ENCODE measurements at regions of chr1 and their contacts with region 1.

Region 1: GRCh38 chr1:50774759-50775351 is 185.2 kb downstream of the FAF1 start:
- DNase-seq: peak; percentile 37
- CTCF ChIP-seq: peak; percentile 59

Region 2: GRCh38 chr1:50412813-50413476 is 361.9 kb before region 1 on chr1:
- CTCF ChIA-PET with region 1: no interaction called
- POLR2A ChIA-PET with region 1: no interaction called
- DNase-seq: no peak
- CTCF ChIP-seq: no peak

Region 3: GRCh38 chr1:50796272-50796671 is 21.4 kb after region 1 on chr1:
- CTCF ChIA-PET with region 1: interaction called, 26 read pairs
- POLR2A ChIA-PET with region 1: no interaction called
- DNase-seq: no peak
- CTCF ChIP-seq: no peak

Region 4: DNA sequence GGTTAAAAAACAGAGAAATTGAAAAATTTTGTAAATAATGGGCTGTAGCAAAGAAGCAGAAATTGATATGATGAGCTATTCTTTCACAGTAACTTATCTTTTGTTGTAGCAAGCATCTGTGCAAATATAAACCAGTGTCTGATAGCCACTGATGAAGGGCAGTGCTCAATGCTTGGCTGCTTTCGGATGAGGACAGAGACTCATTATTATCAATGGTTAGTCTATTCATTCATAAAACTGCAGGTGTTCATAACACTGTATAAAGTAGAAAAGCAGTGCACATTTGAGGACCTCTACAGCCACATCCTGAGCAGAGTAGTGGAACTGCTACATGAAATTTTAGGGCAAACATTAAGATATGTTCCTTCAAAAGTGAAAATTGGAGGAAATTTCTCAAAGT is 78.0 kb after region 1 on chr1:
- CTCF ChIA-PET with region 1: no interaction called
- POLR2A ChIA-PET with region 1: no interaction called
- DNase-seq: no peak
- CTCF ChIP-seq: no peak

Region 5: DNA sequence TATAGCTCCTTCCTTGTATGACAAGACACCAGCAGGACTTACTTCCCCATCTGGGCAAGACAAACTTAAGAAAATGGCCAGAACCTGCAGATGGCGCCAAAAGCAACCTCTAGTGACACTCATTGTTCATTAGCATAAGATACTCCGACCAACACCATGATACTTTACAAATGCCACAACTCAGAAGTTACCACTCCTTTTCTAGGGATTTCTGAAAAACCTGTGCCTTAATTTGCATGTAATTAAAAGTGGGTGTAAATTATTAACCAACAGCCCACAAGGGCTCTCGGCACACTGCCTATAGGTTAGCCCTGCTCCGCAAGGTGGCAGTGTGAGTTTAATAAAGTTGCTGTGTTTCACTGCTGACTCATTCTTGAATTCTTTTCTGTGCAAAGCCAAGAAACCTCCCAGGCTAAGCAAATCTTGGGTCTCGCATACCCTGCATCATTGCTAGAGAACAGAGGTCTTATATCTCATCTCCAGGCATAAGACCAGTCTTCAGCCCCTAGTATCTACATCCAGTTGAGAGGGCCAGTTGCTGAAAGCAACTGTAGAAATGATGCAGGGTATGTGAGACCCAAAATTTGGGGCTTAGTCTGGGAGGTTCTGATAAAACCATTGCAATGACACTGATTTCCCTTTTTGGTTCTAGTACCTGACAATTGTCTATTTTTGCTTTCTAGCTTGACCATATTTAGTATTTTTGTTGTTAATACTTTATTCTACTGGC is 98.8 kb after region 1 on chr1:
- CTCF ChIA-PET with region 1: interaction called, 17 read pairs
- POLR2A ChIA-PET with region 1: no interaction called
- DNase-seq: peak; percentile 62
- CTCF ChIP-seq: peak; percentile 76

Measured in GM10248 (cell line).